AG04449 (cell line): ENCODE measurements at regions of chr1 and their contacts with region 1.

Region 1: GRCh38 chr1:161225534-161226319 is at the start of gene TOMM40L:
- DNase-seq: peak; percentile 99
- H3K4me3 ChIP-seq: peak within 1 kb of the TSS; percentile 95
- CTCF ChIP-seq: peak; percentile 77

Region 2: DNA sequence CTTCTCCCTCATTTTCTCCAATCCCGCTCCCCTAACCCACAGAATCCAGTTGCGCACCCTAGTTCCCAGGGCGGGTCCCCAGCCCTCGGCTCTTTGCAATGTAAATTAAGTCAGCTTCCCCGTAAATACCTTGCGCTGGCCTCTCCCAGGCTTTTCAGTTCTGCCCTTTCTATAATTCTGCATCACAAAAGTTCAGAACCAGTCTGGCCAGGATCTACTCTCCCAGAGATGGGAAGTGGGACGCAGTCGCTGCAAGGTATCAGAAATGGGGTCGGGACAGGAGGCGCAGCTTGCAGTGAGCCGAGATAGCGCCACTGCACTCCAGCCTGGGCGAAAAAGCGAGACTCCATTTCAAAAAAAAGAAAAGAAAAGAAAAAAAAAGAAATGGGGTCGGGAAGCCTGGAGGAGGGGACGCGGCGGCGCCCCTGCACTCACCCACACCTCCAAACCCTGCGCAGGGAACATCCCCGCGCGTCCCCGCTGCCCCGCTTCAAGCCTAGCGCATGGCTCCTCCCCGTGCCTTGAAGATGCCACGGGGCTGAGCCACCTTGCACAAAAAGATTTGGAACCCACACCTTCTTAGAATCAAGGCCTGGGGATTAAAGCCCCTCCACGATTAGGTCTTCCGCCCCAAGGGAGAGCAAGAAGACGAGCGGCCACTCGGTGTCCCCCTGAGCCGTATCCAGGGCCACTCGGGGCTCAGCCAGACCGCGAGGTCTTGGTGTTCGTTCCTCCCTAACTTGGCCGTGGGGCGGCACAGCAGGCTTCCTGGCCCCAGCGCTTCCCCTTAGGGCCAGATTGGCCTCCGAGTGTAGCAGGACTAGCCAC is 243.9 kb before region 1 on chr1:
- CTCF ChIA-PET with region 1: no interaction called
- POLR2A ChIA-PET with region 1: no interaction called
- DNase-seq: no peak
- H3K4me3 ChIP-seq: no peak overlapping the region
- CTCF ChIP-seq: no peak

Region 3: DNA sequence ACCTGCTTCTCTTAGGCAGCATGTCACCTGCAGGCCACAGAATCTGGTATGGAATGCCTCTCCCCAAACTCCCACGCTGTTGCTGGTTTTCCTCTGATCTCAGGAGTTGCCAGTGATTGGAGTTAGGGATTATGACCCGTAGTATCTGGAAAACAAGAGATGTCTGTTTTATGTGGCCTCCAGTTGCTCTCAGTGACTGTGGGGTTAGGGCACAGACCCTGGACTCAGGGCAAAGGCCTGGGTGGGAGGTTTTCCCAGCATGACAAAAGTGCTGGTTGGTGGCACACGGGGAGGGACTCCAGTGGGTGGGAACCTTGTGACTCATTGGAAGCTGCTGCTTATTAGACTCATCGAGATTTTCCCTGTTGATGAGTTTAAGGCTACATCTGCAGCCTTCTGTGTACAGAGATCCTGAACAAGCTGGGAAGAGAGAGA is 12.3 kb after region 1 on chr1 and contains the start of gene NR1I3:
- CTCF ChIA-PET with region 1: interaction called, 120 read pairs
- POLR2A ChIA-PET with region 1: no interaction called
- DNase-seq: no peak
- H3K4me3 ChIP-seq: no peak within 1 kb of the TSS
- CTCF ChIP-seq: no peak

Region 4: GRCh38 chr1:161274874-161275273 is 49.1 kb after region 1 on chr1:
- CTCF ChIA-PET with region 1: interaction called, 10 read pairs
- POLR2A ChIA-PET with region 1: no interaction called
- DNase-seq: no peak
- H3K4me3 ChIP-seq: no peak overlapping the region
- CTCF ChIP-seq: no peak

Region 5: DNA sequence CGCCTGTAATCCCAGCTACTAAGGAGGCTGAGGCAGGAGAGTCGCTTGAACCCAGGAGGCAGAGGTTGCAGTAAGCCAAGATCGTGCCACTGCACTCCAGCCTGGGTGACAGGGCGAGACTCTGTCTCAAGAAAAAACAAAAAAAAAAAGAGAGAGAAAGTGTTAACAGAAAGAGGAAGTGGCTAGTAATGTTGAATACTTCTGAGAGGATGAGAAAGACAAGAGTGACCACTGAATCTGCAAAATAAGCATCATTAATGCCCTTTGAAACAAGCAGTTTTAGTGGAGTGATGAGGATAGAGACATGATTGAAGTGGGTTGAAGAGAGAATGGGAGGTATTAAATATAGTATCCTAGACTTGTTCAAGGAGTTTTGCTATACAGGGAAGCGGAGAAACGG is 72.4 kb after region 1 on chr1:
- CTCF ChIA-PET with region 1: interaction called, 191 read pairs
- POLR2A ChIA-PET with region 1: no interaction called
- DNase-seq: no peak
- H3K4me3 ChIP-seq: no peak overlapping the region
- CTCF ChIP-seq: no peak

Region 6: DNA sequence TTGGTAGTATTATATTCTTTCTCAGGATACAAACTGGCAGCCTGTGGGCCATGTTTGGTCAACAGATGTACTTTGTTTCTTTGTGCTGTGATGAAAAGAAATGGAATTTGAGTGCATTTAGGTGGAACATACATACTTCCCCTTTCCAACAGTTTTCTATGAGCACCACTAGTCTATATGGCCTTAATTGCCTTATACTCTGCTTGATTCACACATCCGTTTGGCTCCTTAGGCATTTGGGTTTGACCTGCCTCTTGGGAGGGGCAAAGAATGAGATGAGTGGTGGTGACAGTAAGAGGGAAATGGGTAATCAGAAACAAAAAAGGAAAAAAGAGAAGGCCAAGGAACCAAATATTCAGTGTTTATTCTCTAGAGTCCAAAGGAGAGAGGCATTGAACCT is 124.9 kb after region 1 on chr1:
- CTCF ChIA-PET with region 1: interaction called, 11 read pairs
- POLR2A ChIA-PET with region 1: no interaction called
- DNase-seq: no peak
- H3K4me3 ChIP-seq: no peak overlapping the region
- CTCF ChIP-seq: no peak

Region 7: DNA sequence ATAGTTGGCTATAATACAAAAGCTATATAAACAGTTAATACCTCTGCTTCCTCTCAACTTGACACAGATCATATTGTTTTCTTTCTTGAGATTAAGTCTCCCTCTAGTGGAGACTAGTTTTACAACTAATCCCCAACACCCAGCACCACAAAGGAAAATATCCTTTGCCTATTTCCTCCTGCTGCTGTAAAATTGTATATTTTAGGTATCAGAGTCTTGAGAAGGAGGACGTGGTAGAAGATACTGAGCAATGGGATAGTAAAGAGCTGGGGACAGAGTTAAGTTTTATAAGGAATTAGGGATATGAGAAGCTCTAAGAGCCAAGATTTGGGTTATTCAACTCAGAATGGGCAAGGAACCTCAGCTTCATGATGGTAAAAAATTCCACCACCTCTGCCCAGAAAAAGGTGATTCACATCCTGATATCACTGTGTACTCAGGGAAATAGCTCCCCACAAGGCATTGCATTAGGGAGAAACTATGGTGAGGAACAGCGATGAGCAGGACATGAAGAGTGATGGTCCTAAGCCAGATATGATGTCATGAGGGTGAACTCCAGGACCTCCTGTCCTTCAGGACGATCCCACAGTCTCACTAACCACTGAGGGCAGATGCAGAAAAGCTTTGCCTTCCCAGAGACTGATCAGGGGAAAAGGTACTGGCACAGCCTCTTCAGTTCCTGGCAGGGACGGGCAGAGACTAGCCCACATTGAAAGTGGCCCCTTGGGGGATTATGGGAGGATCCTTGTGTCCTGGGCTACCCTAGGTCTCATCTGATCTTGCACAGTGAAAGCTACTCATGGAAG is 156.7 kb after region 1 on chr1:
- CTCF ChIA-PET with region 1: interaction called, 270 read pairs
- POLR2A ChIA-PET with region 1: no interaction called
- DNase-seq: no peak
- H3K4me3 ChIP-seq: no peak overlapping the region; the same call in 1 of the 2 replicates
- CTCF ChIP-seq: peak; percentile 31